AG04450 (cell line): ENCODE measurements at regions of chr15 and their contacts with region 1.

Region 1: DNA sequence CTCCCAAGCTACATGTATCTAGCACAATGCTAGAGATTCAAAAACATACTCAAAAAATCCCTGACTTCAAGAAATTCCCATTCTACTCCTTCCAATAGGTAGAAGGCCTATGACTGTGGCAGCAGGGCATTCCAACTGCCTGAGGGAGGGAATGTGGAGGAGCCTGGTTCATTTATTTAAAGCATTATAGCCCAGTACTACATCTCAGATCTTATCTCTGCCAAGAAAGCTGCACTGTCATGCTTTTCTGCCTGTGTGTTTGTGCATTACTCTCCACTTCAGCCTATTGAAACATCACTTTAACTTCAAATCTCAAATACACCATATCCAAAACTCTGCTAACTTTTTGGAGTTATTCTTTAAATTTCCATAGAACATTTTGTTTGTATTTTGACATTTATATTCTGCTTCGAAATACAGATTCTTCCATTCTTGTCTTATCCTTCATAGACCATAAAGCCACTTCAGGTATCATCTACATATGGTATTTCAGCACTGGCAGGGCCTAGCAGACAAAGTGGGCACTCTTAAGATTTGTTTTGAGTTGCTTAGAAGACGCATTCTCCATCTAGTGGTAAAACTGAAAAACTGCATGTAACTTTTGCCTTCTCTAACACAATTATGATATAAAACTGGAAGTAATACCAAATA is 59.1 kb upstream of the NEDD4 start:
- DNase-seq: no peak
- H3K4me3 ChIP-seq: no peak overlapping the region
- H3K27ac ChIP-seq: no peak overlapping the region
- H3K27me3 ChIP-seq: no peaks in the 10 kb centered on the region
- CTCF ChIP-seq: peak; percentile 77

Region 2: DNA sequence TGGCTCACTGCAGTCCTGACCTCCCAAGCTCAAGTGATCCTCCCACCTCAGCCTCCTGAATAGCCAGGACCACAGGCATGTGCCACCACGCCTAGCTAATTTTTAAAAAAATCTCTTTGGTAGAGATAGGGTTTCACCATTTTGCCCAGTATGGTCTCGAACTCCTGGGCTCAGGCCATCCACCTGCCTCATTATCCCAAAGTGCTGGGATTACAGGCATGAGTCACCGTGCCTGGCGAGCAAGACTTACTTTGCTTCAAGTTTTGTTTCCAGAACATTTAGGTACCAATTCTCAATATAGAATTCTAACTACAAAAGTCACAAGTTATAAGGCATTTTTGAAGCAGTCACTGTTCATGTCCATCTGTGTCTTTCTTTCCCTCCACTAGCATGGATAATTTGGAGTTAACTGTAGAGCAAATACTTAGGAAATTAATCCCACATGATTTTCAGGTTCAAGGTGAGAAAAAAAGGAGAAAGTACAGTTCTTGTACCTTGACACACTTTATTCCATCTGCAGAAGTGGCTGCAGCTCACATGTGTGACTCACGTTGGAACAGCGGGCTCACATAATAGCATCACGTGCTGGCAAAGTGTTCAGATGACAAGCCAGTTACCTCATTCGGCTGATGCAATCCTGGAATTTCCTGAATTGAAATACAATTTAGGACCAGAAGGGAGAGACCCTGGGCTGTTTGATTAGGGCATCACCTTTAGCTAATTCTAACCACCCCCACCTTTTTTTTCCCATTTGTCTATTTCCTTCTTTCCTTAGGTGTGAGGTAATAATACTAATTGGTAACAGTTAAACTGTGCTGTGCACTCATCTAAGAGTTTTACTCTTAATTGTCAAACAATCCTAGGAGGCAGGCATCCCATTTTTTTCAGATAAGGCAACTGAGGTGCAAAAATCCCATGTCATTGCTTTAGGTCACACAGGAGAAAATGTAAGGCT is 12.2 kb before region 1 on chr15:
- CTCF ChIA-PET with region 1: interaction called, 25 read pairs
- POLR2A ChIA-PET with region 1: no interaction called
- DNase-seq: peak; percentile 92
- H3K4me3 ChIP-seq: no peak overlapping the region
- H3K27ac ChIP-seq: peak overlapping the region; percentile 94
- H3K27me3 ChIP-seq: no peaks in the 10 kb centered on the region
- CTCF ChIP-seq: no peak

Region 3: DNA sequence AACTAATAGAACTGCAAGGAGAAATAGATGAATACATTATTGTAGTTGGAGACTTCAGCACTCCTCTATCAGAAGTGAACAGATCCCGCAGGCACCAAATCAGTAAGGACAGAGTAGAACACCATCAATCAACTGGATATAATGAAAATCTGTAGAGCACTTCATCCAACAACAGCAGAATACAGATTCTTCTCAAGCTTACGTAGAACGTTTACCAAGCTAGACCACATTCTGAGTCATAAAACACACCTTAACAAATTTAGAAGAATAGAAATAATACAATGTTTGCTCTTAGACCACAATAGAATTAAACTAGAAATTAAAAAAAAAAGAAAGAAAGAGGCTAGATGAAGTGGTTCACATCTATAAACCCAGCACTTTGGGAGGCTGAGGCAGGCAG is 11.6 kb after region 1 on chr15:
- CTCF ChIA-PET with region 1: no interaction called
- POLR2A ChIA-PET with region 1: no interaction called
- DNase-seq: no peak
- H3K4me3 ChIP-seq: no peak overlapping the region
- H3K27ac ChIP-seq: no peak overlapping the region
- H3K27me3 ChIP-seq: no peaks in the 10 kb centered on the region
- CTCF ChIP-seq: no peak